ENCODE measurements at regions of chr9 and their contacts with region 1.

Region 1: DNA sequence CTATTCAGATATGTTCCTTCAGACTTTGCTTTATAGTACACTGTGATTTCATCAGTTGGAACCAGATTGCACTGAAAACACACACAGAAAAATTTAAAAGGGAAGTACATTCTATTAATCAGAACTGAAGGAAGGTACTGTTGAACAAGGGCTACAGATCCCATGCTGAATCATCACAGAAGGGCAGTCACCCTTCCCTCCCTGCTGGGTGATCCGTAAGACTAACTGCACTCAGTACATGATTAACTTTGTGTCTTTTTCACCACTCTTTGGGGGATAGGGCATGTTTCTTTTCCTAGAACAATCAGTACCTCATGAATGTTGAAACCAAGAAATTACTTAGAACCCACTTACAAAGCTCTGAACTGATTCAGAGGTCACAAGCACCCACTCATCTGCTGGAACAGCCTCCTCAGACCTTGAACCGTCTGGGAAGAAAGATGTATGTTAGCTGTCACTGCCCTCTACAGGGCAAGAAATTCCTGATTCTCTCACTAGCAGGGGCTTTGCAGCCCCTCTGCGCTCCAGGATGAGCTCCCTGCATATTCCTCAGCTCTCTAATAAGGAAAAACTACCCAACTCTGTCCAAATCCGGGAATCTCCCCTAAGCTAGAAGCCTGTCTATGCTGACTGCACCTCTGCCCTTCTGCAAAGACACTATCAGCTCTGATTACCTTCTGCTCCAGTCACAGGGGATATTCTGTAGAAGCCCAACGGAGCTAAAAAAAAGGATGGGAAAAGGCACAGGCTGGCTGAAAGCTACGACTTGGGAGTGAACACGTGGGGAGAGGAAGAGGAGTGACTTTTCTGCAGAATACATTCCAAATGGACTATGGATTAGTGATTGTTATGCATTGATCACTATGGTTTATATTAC is 51.0 kb downstream of the IARS1 start:
- DNase-seq: no peak
- ATAC-seq: no peak
- H3K4me3 ChIP-seq: no peak overlapping the region
- H3K27ac ChIP-seq: no peak overlapping the region
- H3K4me1 ChIP-seq: no peaks in the 10 kb centered on the region
- H3K27me3 ChIP-seq: no peaks in the 10 kb centered on the region

Region 2: DNA sequence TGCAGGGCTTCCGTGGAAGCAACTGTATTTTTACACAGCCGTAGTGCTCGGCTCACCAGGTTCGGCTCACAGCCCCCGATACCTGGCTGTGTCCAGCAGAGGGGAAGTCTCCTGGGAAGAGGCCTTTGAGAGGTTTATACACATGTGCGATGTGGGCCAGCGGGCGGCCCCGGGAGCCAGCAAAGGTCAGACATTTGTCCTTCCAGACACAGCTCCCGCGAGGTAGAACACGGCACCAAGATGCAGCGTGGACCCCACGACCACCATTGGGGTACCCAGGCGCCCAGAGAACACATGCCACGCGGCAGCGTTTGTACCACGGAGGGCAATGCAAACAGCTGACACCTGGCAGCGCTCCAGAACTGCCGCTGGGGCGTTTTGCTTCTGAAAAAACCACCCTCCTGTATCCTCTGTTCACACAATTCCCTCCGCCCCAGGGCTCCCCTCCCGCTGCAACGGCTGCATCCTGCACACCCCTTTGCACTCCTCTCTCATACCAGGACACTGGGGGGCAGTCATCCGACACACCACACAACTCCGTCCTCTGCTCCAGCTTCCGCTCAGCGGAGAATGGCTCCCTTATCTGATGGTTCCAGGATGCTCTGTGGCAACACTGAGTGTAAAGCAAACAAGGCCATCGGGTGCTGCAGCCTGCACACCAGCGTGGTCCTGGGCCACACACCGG is 1205.5 kb before region 1 on chr9:
- intact Hi-C with region 1: no loop called
- DNase-seq: peak; percentile 83 to 86 (median 85)
- ATAC-seq: peak; percentile 97 to 98
- H3K4me3 ChIP-seq: no peak overlapping the region
- H3K27ac ChIP-seq: no peak overlapping the region
- H3K4me1 ChIP-seq: no peaks in the 10 kb centered on the region
- H3K27me3 ChIP-seq: no peaks in the 10 kb centered on the region

Region 3: GRCh38 chr9:92133949-92134604 is 108.4 kb before region 1 on chr9:
- intact Hi-C with region 1: loop called in 1 of 4 experiments (anchors 10 kb)
- DNase-seq: peak; percentile 78 to 91 (median 91)
- ATAC-seq: peak; percentile 74 to 78
- H3K4me3 ChIP-seq: no peak overlapping the region
- H3K27ac ChIP-seq: no peak overlapping the region
- H3K4me1 ChIP-seq: no peaks in the 10 kb centered on the region
- H3K27me3 ChIP-seq: no peaks in the 10 kb centered on the region

Region 4: GRCh38 chr9:92140074-92140753 is 102.3 kb before region 1 on chr9:
- intact Hi-C with region 1: loop called in 2 of 4 experiments (anchors 5 to 10 kb)
- DNase-seq: peak; percentile 74 to 89 (median 88)
- ATAC-seq: peak; percentile 56 to 74
- H3K4me3 ChIP-seq: no peak overlapping the region
- H3K27ac ChIP-seq: no peak overlapping the region
- H3K4me1 ChIP-seq: no peaks in the 10 kb centered on the region
- H3K27me3 ChIP-seq: no peaks in the 10 kb centered on the region

Region 5: GRCh38 chr9:92276331-92277032 is 34.0 kb after region 1 on chr9:
- intact Hi-C with region 1: loop called in 1 of 4 experiments (anchors 5 kb)
- DNase-seq: no peak
- ATAC-seq: no peak
- H3K4me3 ChIP-seq: no peak overlapping the region
- H3K27ac ChIP-seq: no peak overlapping the region
- H3K4me1 ChIP-seq: no peaks in the 10 kb centered on the region
- H3K27me3 ChIP-seq: no peaks in the 10 kb centered on the region

Region 6: DNA sequence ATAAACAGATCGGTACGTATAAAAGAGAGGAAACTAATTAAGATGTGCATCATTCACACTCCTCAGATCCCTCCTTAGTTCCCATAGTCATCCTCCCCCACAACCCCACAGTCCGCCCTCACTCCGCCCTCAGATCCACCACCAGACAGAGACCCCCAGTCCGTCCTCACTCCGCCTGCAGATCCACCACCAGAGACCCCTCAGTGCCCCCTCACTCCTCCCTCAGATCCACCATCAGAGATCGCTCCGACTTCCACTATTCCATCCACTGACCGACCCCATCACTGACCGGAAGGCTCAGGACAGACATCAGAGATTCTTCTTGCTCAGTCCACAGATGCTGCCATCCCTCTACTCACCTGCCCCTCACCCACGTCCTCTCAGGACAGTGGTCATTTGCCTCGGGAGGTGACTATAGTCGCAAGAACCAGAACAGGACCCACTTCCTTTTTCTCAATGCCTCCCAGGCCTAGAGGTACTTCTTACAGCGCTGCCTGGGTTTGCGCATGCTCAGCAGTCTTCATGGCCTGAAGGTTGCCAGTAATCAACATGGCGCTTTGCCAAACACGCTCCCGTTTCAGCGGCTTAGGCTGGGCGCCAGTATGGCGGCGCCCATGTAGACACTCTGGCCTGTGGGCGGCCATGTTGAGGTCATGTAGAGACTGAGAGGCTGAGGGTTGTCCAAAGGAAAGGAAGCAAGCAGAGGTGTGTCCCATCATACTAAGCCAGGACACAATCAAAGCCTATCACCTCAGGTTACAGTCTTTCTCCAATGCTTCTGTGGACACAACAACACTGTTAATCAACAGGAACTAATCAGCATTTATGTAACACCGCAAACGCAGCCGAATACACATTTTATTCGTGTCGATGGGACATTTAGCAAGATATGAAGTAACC is 635.3 kb after region 1 on chr9 and contains the start of gene ZNF484:
- intact Hi-C with region 1: no loop called
- DNase-seq: peak; percentile 98 to 99 (median 98)
- ATAC-seq: peak; percentile 99 to 100
- H3K4me3 ChIP-seq: peak within 1 kb of the TSS; percentile 79
- H3K27ac ChIP-seq: peak within 1 kb of the TSS; percentile 80
- H3K4me1 ChIP-seq: peaks cover 3% of the 10 kb centered on the region
- H3K27me3 ChIP-seq: no peaks in the 10 kb centered on the region
- total RNA-seq, gene ZNF484: 6.9 to 8.2 (median 7.2) TPM

Measured in right cardiac atrium (tissue), 5 donors.